GM12878 (cell line): ENCODE measurements at regions of chr1 and their contacts with region 1.

Region 1: GRCh38 chr1:207321079-207321789 is at the start of gene CD55:
- DNase-seq: peak; percentile 97
- ATAC-seq: peak; percentile 92
- H3K4me3 ChIP-seq: peak within 1 kb of the TSS; percentile 85
- H3K27ac ChIP-seq: peak within 1 kb of the TSS; percentile 86
- H3K4me1 ChIP-seq: no peaks in the 10 kb centered on the region
- H3K27me3 ChIP-seq: no peaks in the 10 kb centered on the region
- CTCF ChIP-seq: peak; percentile 16 to 39 (median 37); a peak in 4 of 6 replicates
- EP300 ChIP-seq: peak in 1 of 2 experiments; percentile 90; a peak in 3 of 4 replicates
- POLR2A ChIP-seq: peak; percentile 97
- RAD21 ChIP-seq: peak; percentile 31
- polyA plus RNA-seq, gene CD55: 5.2 to 6.0 TPM

Region 2: GRCh38 chr1:207084701-207085180 is 236.5 kb before region 1 on chr1:
- CTCF ChIA-PET with region 1: interaction called, 5 read pairs
- POLR2A ChIA-PET with region 1: no interaction called
- RAD21 ChIA-PET with region 1: interaction called, 10 read pairs
- SMC1A ChIA-PET with region 1: interaction called, 3 read pairs
- in situ Hi-C with region 1: no loop called
- intact Hi-C with region 1: loop called (anchors 5 kb)
- DNase-seq: no peak
- ATAC-seq: peak; percentile 96
- H3K4me3 ChIP-seq: no peak overlapping the region
- H3K27ac ChIP-seq: no peak overlapping the region
- H3K4me1 ChIP-seq: peaks cover 4% of the 10 kb centered on the region; the same call in 1 of the 2 replicates
- H3K27me3 ChIP-seq: no peaks in the 10 kb centered on the region
- CTCF ChIP-seq: peak; percentile 63 to 68 (median 66)
- EP300 ChIP-seq: no peak
- POLR2A ChIP-seq: no peak
- RAD21 ChIP-seq: peak; percentile 80

Region 3: DNA sequence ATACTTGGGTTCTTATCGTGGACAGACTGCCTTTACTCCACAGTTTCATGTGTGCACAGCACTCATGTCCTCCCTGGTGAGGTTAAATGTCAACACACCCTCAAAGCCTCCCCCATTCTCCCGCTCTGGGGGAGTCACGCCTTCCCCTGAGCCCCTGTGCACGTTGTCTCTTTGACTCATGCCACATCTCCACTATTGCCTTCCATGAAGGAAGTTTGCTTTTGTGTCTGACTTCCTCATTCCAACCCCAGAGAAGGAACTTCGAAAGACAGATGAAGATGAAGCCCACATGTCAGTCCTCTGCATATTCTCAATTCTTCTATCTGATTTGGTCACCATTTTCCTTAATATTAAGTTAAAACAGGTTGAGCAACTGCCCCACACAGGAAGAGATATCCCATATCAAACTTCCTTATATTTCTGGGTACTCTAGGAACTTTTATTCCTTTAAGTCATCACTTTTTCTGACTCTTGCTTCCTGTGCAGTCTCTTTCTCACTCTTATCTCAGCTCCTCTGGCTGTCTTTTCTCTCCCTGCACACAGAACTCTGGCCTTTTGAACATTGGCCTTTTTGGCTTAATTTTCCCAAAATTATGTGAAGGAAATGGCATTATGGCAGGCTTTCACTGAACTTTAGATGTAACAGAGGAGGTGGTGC is 175.7 kb before region 1 on chr1:
- CTCF ChIA-PET with region 1: no interaction called
- POLR2A ChIA-PET with region 1: no interaction called
- RAD21 ChIA-PET with region 1: no interaction called
- SMC1A ChIA-PET with region 1: no interaction called
- in situ Hi-C with region 1: no loop called
- intact Hi-C with region 1: no loop called
- DNase-seq: no peak
- ATAC-seq: no peak
- H3K4me3 ChIP-seq: no peak overlapping the region
- H3K27ac ChIP-seq: no peak overlapping the region
- H3K4me1 ChIP-seq: no peaks in the 10 kb centered on the region
- H3K27me3 ChIP-seq: no peaks in the 10 kb centered on the region; a peak in 1 of 4 replicates
- CTCF ChIP-seq: no peak
- EP300 ChIP-seq: no peak
- POLR2A ChIP-seq: no peak
- RAD21 ChIP-seq: no peak

Region 4: GRCh38 chr1:207240325-207241095 is 80.7 kb before region 1 on chr1:
- CTCF ChIA-PET with region 1: no interaction called
- POLR2A ChIA-PET with region 1: no interaction called
- RAD21 ChIA-PET with region 1: no interaction called
- SMC1A ChIA-PET with region 1: no interaction called
- in situ Hi-C with region 1: no loop called
- intact Hi-C with region 1: no loop called
- DNase-seq: no peak
- ATAC-seq: no peak
- H3K4me3 ChIP-seq: no peak overlapping the region
- H3K27ac ChIP-seq: no peak overlapping the region
- H3K4me1 ChIP-seq: no peaks in the 10 kb centered on the region
- H3K27me3 ChIP-seq: no peaks in the 10 kb centered on the region
- CTCF ChIP-seq: no peak
- EP300 ChIP-seq: no peak
- POLR2A ChIP-seq: no peak
- RAD21 ChIP-seq: no peak

Region 5: DNA sequence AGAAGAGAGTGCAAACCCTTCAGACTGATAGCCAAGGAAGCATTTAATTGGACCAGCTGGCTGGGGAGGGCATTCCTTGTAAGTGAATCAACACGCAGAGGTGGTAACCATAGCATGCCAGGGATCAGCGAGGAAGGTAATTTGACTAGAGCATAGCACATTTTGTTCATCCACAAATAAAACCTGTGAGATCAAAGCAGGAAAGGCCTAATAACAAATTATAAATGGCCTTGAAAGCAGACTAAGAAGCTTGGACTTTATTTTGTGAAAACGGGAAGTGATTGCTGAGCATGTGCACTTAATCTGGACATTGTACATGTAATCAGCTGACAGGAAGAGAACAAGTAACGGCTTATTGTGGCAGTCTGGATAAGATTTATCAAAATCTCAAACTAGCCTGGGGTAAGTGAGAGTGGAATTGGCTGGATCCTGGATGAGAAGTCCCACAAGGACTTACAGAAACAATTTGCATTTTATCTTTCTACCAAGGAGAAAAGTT is 11.4 kb before region 1 on chr1:
- CTCF ChIA-PET with region 1: interaction called, 8 read pairs
- POLR2A ChIA-PET with region 1: no interaction called
- RAD21 ChIA-PET with region 1: interaction called, 3 read pairs
- SMC1A ChIA-PET with region 1: interaction called, 22 read pairs
- in situ Hi-C with region 1: no loop called
- intact Hi-C with region 1: no loop called
- DNase-seq: no peak
- ATAC-seq: peak; percentile 74
- H3K4me3 ChIP-seq: no peak overlapping the region
- H3K27ac ChIP-seq: no peak overlapping the region
- H3K4me1 ChIP-seq: no peaks in the 10 kb centered on the region
- H3K27me3 ChIP-seq: no peaks in the 10 kb centered on the region
- CTCF ChIP-seq: no peak
- EP300 ChIP-seq: no peak
- POLR2A ChIP-seq: no peak
- RAD21 ChIP-seq: no peak

Region 6: GRCh38 chr1:207336559-207337467 is 15.6 kb after region 1 on chr1:
- CTCF ChIA-PET with region 1: interaction called, 43 read pairs
- POLR2A ChIA-PET with region 1: interaction called, 74 read pairs
- RAD21 ChIA-PET with region 1: interaction called, 62 read pairs
- SMC1A ChIA-PET with region 1: interaction called, 144 read pairs
- in situ Hi-C with region 1: no loop called
- intact Hi-C with region 1: loop called (anchors 1 kb)
- DNase-seq: peak; percentile 91
- ATAC-seq: peak; percentile 78
- H3K4me3 ChIP-seq: peak overlapping the region; percentile 1; the same call in 1 of the 2 replicates
- H3K27ac ChIP-seq: peak overlapping the region; percentile 81
- H3K4me1 ChIP-seq: peaks cover 47% of the 10 kb centered on the region
- H3K27me3 ChIP-seq: no peaks in the 10 kb centered on the region
- CTCF ChIP-seq: no peak
- EP300 ChIP-seq: peak; percentile 72 to 89; a peak in 3 of 4 replicates
- POLR2A ChIP-seq: no peak
- RAD21 ChIP-seq: no peak

Region 7: GRCh38 chr1:207355060-207355459 is 33.8 kb after region 1 on chr1:
- CTCF ChIA-PET with region 1: no interaction called
- POLR2A ChIA-PET with region 1: no interaction called
- RAD21 ChIA-PET with region 1: interaction called, 19 read pairs
- SMC1A ChIA-PET with region 1: interaction called, 4 read pairs
- in situ Hi-C with region 1: no loop called
- intact Hi-C with region 1: loop called (anchors 5 kb)
- DNase-seq: no peak
- ATAC-seq: peak; percentile 91
- H3K4me3 ChIP-seq: no peak overlapping the region
- H3K27ac ChIP-seq: no peak overlapping the region
- H3K4me1 ChIP-seq: no peaks in the 10 kb centered on the region
- H3K27me3 ChIP-seq: no peaks in the 10 kb centered on the region
- CTCF ChIP-seq: no peak
- EP300 ChIP-seq: no peak
- POLR2A ChIP-seq: no peak
- RAD21 ChIP-seq: no peak

Region 8: DNA sequence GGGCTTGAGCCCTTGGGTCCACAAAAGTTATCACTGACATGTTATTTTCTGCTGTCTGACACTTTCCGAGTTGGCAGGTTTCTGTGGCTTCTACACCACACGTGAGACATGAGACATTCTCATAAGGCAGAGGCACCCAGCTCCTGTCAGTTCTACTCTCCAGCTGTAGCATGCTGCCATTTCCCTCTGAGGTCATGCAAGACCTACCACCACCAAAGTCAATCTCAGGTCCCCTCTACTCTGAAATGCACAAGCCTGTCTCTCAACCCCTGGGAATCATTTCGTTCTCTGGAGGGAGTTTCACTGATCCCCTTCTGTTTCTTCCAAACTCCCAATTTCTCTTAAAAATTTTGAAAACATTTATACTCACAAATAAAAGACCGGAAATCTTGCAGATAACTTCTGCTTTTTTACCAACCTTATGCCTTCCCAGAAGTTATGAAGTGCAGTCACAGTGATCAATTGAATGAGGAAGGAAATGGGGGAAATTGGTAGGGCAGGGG is 93.4 kb after region 1 on chr1:
- CTCF ChIA-PET with region 1: no interaction called
- POLR2A ChIA-PET with region 1: interaction called, 4 read pairs
- RAD21 ChIA-PET with region 1: interaction called, 7 read pairs
- SMC1A ChIA-PET with region 1: interaction called, 10 read pairs
- in situ Hi-C with region 1: no loop called
- intact Hi-C with region 1: no loop called
- DNase-seq: peak; percentile 93
- ATAC-seq: peak; percentile 85
- H3K4me3 ChIP-seq: no peak overlapping the region
- H3K27ac ChIP-seq: peak overlapping the region; percentile 86
- H3K4me1 ChIP-seq: peaks cover 40% of the 10 kb centered on the region
- H3K27me3 ChIP-seq: no peaks in the 10 kb centered on the region
- CTCF ChIP-seq: no peak
- EP300 ChIP-seq: peak; percentile 60 to 64; a peak in 2 of 4 replicates
- POLR2A ChIP-seq: peak; percentile 39; the same call in 1 of the 2 replicates
- RAD21 ChIP-seq: no peak

Region 9: GRCh38 chr1:207499573-207499972 is 178.3 kb after region 1 on chr1:
- CTCF ChIA-PET with region 1: interaction called, 5 read pairs
- POLR2A ChIA-PET with region 1: interaction called, 3 read pairs
- RAD21 ChIA-PET with region 1: interaction called, 4 read pairs
- SMC1A ChIA-PET with region 1: interaction called, 3 read pairs
- in situ Hi-C with region 1: no loop called
- intact Hi-C with region 1: loop called (anchors 10 kb)
- DNase-seq: peak; percentile 64
- ATAC-seq: peak; percentile 81
- H3K4me3 ChIP-seq: no peak overlapping the region
- H3K27ac ChIP-seq: no peak overlapping the region
- H3K4me1 ChIP-seq: peaks cover 6% of the 10 kb centered on the region
- H3K27me3 ChIP-seq: no peaks in the 10 kb centered on the region; a peak in 1 of 4 replicates
- CTCF ChIP-seq: peak; percentile 64 to 85 (median 80)
- EP300 ChIP-seq: no peak
- POLR2A ChIP-seq: no peak
- RAD21 ChIP-seq: peak; percentile 96

Region 10: GRCh38 chr1:207644166-207644851 is 323.1 kb after region 1 on chr1:
- CTCF ChIA-PET with region 1: no interaction called
- POLR2A ChIA-PET with region 1: no interaction called
- RAD21 ChIA-PET with region 1: no interaction called
- SMC1A ChIA-PET with region 1: no interaction called
- in situ Hi-C with region 1: no loop called
- intact Hi-C with region 1: no loop called
- DNase-seq: no peak
- ATAC-seq: no peak; the same call in 2 of the 3 replicates
- H3K4me3 ChIP-seq: peak overlapping the region; percentile 72
- H3K27ac ChIP-seq: no peak overlapping the region
- H3K4me1 ChIP-seq: peaks cover 2% of the 10 kb centered on the region; the same call in 1 of the 2 replicates
- H3K27me3 ChIP-seq: no peaks in the 10 kb centered on the region
- CTCF ChIP-seq: no peak
- EP300 ChIP-seq: no peak
- POLR2A ChIP-seq: no peak
- RAD21 ChIP-seq: no peak